AG04450 (cell line): ENCODE measurements at regions of chr5 and their contacts with region 1.

Region 1: GRCh38 chr5:59039296-59040023 is 456.6 kb downstream of the RAB3C start:
- DNase-seq: no peak
- H3K4me3 ChIP-seq: peak overlapping the region; percentile 92
- H3K27ac ChIP-seq: peak overlapping the region; percentile 74
- H3K27me3 ChIP-seq: no peaks in the 10 kb centered on the region
- CTCF ChIP-seq: no peak

Region 2: DNA sequence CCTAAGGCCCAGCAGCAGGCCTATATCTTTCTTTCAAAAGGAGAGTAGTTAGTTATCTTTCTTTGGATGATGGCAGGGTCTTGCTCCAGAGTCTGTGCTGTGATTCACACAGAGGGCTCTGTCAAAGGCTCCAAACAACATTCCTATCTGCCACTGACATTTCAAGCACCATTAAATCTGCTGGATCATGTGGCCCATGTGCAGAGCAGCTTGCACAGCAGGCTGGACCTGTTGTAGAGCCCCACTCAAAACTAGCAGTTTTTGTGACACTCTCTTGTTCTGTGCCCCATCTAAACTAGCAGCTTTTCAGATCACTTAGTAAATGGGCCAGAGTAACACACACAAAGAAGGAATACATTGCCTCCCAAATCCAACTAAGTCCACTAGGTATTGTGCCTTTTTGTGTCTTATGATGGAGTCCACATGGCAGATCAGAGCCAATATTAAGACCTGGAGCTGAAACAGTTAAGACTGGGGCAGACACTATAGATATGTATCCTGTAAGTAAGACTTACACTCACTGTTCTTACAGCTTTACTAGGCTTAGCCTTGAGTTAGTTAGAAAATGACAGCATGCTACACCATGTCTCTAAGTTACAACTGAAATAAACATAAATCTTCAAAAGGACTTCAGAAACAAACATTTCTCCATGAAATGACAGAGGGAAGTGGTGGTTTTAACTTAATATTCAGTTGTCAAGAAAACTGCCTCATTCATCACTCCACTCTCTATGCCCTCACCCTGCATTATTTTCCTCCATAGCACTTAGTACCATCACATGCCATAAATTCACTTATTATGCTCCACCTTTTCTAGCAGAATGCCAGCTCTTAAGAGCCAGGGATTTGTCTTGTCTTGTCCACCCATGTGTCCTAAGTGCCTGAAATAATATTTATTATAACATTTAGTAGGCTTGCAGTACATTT is 55.7 kb before region 1 on chr5:
- CTCF ChIA-PET with region 1: interaction called, 12 read pairs
- POLR2A ChIA-PET with region 1: no interaction called
- DNase-seq: no peak
- H3K4me3 ChIP-seq: no peak overlapping the region
- H3K27ac ChIP-seq: no peak overlapping the region
- H3K27me3 ChIP-seq: no peaks in the 10 kb centered on the region
- CTCF ChIP-seq: no peak

Region 3: DNA sequence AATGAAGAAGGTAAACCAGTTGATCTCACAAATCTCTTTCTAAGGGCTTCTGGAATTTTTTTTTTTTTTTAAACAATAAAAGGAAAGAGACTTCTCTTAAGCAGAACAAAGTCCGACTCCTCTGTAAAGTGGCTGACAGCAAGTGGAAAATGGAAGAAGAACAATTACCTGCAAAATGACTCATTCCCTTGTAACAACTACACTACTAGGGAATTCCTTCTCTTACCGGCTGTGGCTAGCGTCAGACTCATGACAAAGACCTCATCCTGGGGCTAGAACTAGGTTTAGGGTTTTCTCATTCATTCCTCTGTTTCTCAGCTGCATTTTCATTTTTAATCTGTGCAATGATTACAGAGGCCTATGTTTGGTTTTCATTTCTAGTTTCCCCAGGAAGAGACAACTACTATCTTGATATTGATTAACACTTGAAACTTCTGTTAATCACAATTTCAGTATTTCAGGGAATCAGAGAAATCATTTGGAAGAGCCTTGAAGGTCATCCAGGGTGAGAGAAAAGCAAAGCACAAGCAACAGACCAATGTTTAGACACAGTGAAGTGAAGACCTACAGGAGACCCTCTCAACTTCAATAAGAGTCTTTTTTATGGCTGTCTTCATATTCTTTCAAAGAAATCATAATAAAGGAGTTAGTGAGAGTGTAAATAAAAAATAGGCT is 18.7 kb before region 1 on chr5:
- CTCF ChIA-PET with region 1: interaction called, 14 read pairs
- POLR2A ChIA-PET with region 1: no interaction called
- DNase-seq: no peak
- H3K4me3 ChIP-seq: no peak overlapping the region
- H3K27ac ChIP-seq: no peak overlapping the region
- H3K27me3 ChIP-seq: no peaks in the 10 kb centered on the region
- CTCF ChIP-seq: no peak

Region 4: GRCh38 chr5:59095480-59095879 is 56.0 kb after region 1 on chr5:
- CTCF ChIA-PET with region 1: interaction called, 12 read pairs
- POLR2A ChIA-PET with region 1: no interaction called
- DNase-seq: peak; percentile 29
- H3K4me3 ChIP-seq: no peak overlapping the region
- H3K27ac ChIP-seq: no peak overlapping the region
- H3K27me3 ChIP-seq: no peaks in the 10 kb centered on the region
- CTCF ChIP-seq: no peak

Region 5: DNA sequence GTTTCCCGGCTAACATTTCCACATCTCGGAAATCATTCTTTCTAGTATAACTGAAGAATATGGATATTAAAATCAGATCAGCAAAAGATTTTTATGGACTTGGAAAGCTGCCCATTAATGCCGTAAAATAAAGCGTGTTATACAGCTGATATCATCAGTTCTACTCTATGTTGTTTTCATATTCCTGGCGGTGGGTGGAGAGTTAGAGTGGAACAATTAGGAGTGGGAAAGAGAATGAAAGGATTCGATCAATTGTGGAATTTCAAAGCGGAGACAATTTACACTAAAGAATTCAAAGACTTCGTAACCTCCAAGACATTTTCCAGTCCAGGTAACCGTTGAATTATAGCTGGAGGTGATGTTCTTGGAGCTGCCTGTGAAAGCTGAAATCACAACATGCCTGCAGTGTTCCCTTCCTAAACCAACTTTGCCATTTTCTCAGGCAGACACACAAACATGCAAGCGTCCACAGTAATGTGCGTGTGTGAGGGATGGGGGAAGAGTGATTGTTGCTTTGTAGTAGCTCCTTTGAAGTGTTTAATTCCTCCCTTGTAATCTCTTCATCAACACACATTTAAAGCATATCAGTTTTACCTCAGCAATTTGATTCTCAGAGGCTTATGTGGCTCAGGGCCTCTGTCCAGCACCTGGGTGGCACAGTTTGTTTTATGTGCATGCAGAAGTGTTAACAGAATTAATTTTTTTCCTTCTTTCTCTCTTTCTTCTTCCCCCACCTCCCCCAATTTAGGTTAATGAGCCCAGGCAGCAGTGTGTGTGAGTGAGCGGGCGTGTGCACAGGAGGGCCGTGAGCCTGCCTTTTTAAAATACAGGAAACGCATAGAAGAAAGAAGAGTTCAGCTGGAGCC is 87.5 kb after region 1 on chr5:
- CTCF ChIA-PET with region 1: interaction called, 23 read pairs
- POLR2A ChIA-PET with region 1: interaction called, 11 read pairs
- DNase-seq: no peak
- H3K4me3 ChIP-seq: peak overlapping the region; percentile 42
- H3K27ac ChIP-seq: peak overlapping the region; percentile 97
- H3K27me3 ChIP-seq: no peaks in the 10 kb centered on the region
- CTCF ChIP-seq: no peak